Dendritic cell treated with granulocyte-macrophage colony-stimulating factor and Interleukin-4, amounts not matched to agents 40 ng/mL and 50 ng/mL, for 4 days (primary cell): ENCODE measurements at regions of chr3 and their contacts with region 1.

Region 1: GRCh38 chr3:111717601-111718000 is 122.5 kb upstream of the ZBED2 start:
- H3K4me3 Mint-ChIP-seq: no peak overlapping the region
- H3K27ac Mint-ChIP-seq: no peak overlapping the region
- H3K4me1 Mint-ChIP-seq: peaks cover 7% of the 10 kb centered on the region
- H3K27me3 Mint-ChIP-seq: no peaks in the 10 kb centered on the region

Region 2: DNA sequence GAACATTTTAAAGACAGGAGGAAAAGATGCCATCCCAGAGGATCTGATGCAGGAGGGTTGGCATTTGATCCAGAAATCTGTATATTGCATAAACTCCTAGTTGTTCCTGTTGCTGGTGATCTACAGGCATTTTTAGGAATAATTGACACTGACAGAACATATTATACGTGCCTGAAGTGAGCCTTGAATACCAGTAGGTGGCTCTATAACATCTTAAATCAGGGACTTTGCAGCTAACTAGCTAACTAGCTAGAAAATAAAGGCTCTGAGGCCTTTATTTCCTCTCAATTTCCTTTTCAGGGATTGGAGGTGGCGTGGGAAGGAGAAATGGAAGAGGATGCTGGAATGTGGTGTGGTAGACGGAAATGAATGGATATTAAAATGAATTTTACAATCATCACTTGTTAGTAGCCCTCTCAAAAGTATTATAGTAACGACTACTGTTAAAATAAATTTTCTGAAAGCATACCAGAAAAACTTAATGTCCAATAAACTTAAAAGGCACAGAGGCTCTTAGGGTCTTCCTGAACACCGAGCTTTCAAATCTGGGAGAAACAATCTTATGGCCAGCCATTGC is 48.6 kb before region 1 on chr3:
- intact Hi-C with region 1: loop called (anchors 1 kb)
- H3K4me3 Mint-ChIP-seq: no peak overlapping the region
- H3K27ac Mint-ChIP-seq: no peak overlapping the region
- H3K4me1 Mint-ChIP-seq: peaks cover 20% of the 10 kb centered on the region
- H3K27me3 Mint-ChIP-seq: peaks cover 14% of the 10 kb centered on the region

Region 3: GRCh38 chr3:111859974-111860859 is 142.6 kb after region 1 on chr3:
- intact Hi-C with region 1: loop called (anchors 2 kb)
- H3K4me3 Mint-ChIP-seq: peak overlapping the region; percentile 72
- H3K27ac Mint-ChIP-seq: peak overlapping the region; percentile 16
- H3K4me1 Mint-ChIP-seq: peaks cover 22% of the 10 kb centered on the region
- H3K27me3 Mint-ChIP-seq: peaks cover 54% of the 10 kb centered on the region

Region 4: DNA sequence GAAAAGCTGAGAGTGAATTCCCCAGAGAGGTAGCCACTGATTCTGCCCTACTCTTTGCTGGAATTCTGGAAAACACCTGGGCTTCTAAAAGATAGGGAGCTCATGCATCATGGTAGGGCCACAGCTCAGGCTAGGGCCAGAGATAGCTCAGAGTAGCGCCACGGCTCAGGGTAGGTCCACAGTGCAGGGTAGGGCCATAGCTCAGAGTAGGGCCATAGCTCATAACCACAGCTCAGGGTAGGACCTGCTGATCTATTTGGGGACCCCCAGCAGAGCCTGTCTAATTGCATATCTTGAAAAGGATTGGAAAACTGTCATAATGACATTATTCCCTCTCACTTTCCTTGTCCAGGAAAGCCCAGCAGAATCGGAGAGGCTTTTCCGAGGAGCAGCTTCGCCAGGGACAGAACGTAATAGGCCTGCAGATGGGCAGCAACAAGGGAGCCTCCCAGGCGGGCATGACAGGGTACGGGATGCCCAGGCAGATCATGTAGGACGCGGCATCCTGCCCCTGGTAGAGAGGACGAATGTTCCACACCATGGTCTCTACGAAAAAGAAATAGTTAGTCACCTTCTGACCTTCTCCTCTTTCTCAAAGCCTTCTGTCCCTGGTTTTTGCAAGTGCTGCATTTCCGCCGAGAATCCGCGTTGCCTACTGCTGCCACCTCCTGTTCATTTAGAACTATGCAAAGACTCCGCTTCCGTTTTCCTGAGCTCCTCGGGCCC is 295.6 kb after region 1 on chr3:
- intact Hi-C with region 1: loop called (anchors 1 kb)
- H3K4me3 Mint-ChIP-seq: no peak overlapping the region
- H3K27ac Mint-ChIP-seq: no peak overlapping the region
- H3K4me1 Mint-ChIP-seq: peaks cover 12% of the 10 kb centered on the region
- H3K27me3 Mint-ChIP-seq: peaks cover 1% of the 10 kb centered on the region